ENCODE measurements at regions of chr12 and their contacts with region 1.

Region 1: DNA sequence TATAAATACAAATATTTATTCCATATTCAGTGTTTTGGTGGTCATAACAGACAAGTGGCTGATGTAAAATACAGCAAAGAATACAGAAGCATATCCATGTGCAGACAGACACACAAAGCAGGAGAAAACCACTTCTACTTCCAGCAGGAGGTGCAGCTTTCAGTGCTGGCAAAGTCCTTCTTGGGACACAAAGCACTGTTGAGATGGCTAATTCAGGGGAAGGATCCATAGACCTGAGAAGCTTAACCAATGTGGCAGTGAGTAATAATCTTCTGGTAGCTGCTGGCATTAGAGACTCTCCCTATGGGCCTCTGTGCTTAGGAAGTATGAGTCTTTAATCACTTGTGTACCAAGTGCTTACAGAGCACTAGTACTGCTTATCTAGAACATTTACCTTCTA is 26.8 kb downstream of the AMN1 start:
- DNase-seq: no peak
- H3K4me3 ChIP-seq: no peak overlapping the region
- H3K27ac ChIP-seq: no peak overlapping the region
- H3K4me1 ChIP-seq: no peaks in the 10 kb centered on the region
- H3K27me3 ChIP-seq: no peaks in the 10 kb centered on the region
- CTCF ChIP-seq: no peak
- EP300 ChIP-seq: no peak
- POLR2A ChIP-seq: no peak

Region 2: GRCh38 chr12:30978639-30979038 is 723.4 kb before region 1 on chr12:
- intact Hi-C with region 1: loop called in 1 of 4 experiments (anchors 5 kb)
- DNase-seq: no peak
- H3K4me3 ChIP-seq: no peak overlapping the region
- H3K27ac ChIP-seq: no peak overlapping the region
- H3K4me1 ChIP-seq: no peaks in the 10 kb centered on the region
- H3K27me3 ChIP-seq: no peaks in the 10 kb centered on the region
- CTCF ChIP-seq: no peak
- EP300 ChIP-seq: no peak
- POLR2A ChIP-seq: no peak

Region 3: DNA sequence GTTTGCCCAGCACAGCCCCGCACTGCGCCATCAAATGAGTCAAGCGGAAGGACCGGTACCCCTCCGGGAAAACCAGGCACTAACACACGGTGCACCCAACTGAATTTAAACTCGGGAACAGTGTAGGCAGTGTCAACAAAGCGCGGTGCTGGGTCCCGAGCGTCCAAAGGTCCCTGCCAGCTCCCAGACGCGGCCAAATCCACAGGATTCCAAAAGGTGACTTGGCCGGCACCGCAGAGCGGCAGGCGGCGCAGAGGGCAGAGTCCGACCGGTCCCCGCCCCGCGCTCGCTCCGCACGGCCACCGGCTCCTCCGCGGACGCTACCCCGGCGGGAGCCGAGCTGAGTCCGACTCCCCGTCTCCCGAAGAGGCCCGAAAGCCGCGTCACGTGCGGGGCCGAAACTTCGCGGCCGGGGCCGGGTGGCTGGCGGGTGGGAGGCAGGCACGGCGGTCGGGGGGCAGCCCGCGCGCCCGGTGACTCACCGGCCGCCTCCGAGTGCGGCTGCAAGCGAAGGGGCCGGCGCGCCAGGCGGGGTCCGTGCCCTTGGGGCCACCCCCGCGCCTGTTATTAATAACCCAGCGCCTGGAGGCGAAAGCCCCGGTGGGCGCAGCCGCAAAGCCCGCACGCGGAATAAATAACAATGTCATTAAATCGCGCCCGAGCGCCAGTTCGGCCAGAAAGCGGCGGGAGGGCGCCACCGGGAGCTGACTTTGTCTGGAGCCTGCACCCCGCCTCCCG is 112.0 kb before region 1 on chr12:
- intact Hi-C with region 1: no loop called
- DNase-seq: peak; percentile 65 to 83 (median 77)
- H3K4me3 ChIP-seq: peak overlapping the region; percentile 95
- H3K27ac ChIP-seq: peak overlapping the region; percentile 98 to 99
- H3K4me1 ChIP-seq: peaks cover 3% of the 10 kb centered on the region
- H3K27me3 ChIP-seq: no peaks in the 10 kb centered on the region
- CTCF ChIP-seq: peak in 1 of 3 donors; percentile 7
- EP300 ChIP-seq: no peak
- POLR2A ChIP-seq: peak; percentile 4

Region 4: GRCh38 chr12:32679091-32679919 is 977.3 kb after region 1 on chr12 and contains the start of gene DNM1L:
- intact Hi-C with region 1: no loop called
- DNase-seq: peak; percentile 93 to 94 (median 94)
- H3K4me3 ChIP-seq: peak within 1 kb of the TSS; percentile 99
- H3K27ac ChIP-seq: peak within 1 kb of the TSS; percentile 76 to 90
- H3K4me1 ChIP-seq: no peaks in the 10 kb centered on the region
- H3K27me3 ChIP-seq: no peaks in the 10 kb centered on the region
- CTCF ChIP-seq: peak in 2 of 3 donors; percentile 25 to 45
- EP300 ChIP-seq: no peak
- POLR2A ChIP-seq: peak; percentile 66
- total RNA-seq, gene DNM1L: 46.7 to 77.5 (median 48.5) TPM